ENCODE measurements at regions of chr14 and their contacts with region 1.

Region 1: GRCh38 chr14:94598814-94599652 is 13.2 kb upstream of the SERPINA3 start:
- DNase-seq: peak; percentile 50 to 87
- H3K4me3 ChIP-seq: no peak overlapping the region
- H3K27ac ChIP-seq: peak overlapping the region; percentile 73 to 79
- H3K4me1 ChIP-seq: peaks cover 10 to 39% of the 10 kb centered on the region in 2 donors
- H3K27me3 ChIP-seq: no peaks in the 10 kb centered on the region
- CTCF ChIP-seq: no peak

Region 2: GRCh38 chr14:95157327-95158189 is 558.5 kb after region 1 on chr14 and contains the start of gene DICER1:
- intact Hi-C with region 1: loop called (anchors 2 kb)
- DNase-seq: peak; percentile 79 to 98
- H3K4me3 ChIP-seq: peak within 1 kb of the TSS; percentile 88 to 97
- H3K27ac ChIP-seq: peak within 1 kb of the TSS; percentile 89 to 94
- H3K4me1 ChIP-seq: peaks cover 3 to 16% of the 10 kb centered on the region in 2 donors
- H3K27me3 ChIP-seq: no peaks in the 10 kb centered on the region
- CTCF ChIP-seq: no peak
- total RNA-seq, gene DICER1: 134 TPM

Region 3: GRCh38 chr14:95507701-95508103 is 908.7 kb after region 1 on chr14:
- intact Hi-C with region 1: loop called (anchors 5 kb)
- DNase-seq: peak in 1 of 2 donors; percentile 88
- H3K4me3 ChIP-seq: peak overlapping the region in 1 of 2 donors; percentile 1
- H3K27ac ChIP-seq: peak overlapping the region; percentile 84 to 88
- H3K4me1 ChIP-seq: peaks cover 15 to 44% of the 10 kb centered on the region in 2 donors
- H3K27me3 ChIP-seq: no peaks in the 10 kb centered on the region
- CTCF ChIP-seq: no peak